Posterior cingulate gyrus (tissue), 11 donors: ENCODE measurements at regions of chr1 and their contacts with region 1.

Region 1: DNA sequence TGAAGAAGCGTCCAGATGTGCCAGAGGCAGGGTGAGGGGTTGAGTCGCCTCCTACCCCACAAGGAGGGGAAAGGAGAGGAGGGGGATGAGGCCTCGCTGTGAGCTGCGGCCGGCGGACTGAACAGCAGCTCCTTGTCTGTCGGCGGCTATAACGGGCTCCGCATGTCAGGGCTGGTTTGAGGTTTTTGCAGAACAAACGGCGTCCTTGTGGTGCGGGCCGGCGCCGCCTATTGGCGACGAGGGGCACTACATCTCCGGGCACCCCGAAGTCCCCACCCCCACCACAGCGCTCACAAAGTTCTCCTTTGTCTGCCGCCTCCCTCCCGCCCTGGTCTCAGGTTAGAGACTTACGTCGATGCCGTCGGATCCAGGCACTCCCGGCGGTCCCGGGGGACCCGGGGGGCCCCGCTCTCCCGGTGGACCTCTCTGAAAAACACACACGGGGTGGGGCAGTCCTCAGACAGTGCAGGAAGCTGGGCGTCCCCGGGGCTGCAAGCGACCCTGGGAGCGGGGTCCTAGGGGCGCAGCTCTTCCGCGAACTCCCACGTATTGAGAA is 1.8 kb downstream of the COL9A2 start:
- DNase-seq: peak; percentile 78 to 98 (median 88)

Region 2: GRCh38 chr1:40079774-40080400 is 235.4 kb before region 1 on chr1:
- intact Hi-C with region 1: loop called (anchors 10 kb)
- DNase-seq: no peak

Region 3: DNA sequence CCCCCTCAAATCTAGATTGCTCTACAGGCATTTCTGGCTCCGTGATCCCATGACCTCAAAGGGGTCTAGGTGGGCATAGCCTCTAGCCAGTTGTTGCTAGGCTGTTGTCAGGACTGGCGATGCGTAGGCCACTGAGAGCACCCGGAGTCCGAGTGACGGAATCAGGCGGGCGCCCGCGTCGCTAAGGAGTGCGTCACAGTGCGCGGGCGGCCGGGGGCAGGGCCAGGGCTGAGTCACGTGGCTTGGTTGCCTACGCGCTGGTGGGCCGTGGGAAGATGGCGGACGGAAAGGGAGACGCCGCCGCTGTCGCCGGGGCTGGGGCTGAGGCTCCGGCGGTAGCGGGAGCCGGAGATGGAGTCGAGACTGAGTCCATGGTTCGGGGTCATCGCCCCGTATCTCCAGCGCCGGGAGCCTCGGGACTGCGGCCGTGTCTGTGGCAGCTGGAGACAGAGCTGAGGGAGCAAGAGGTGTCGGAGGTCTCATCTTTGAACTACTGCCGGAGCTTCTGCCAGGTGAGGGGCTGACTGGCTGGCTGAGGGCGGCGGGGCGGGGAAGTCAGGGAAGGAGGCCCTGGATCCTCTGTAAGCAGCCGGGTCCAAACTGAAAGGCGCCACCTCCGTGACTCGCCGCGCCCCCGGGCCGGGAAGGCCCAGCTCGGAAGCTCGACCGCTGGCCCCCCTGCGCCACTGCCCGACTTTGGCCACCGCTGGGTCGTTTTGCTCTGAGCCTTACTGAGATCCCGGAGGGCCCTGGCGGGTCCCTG is 154.0 kb before region 1 on chr1 and contains the start of gene RLF:
- intact Hi-C with region 1: loop called (anchors 5 kb)
- DNase-seq: peak; percentile 90 to 99 (median 94)

Region 4: GRCh38 chr1:40257688-40258444 is 57.5 kb before region 1 on chr1 and contains the start of gene ZMPSTE24:
- intact Hi-C with region 1: loop called (anchors 2 kb)
- DNase-seq: peak; percentile 93 to 99 (median 95)